HEK293T (cell line): ENCODE measurements at regions of chr3 and their contacts with region 1.

Region 1: DNA sequence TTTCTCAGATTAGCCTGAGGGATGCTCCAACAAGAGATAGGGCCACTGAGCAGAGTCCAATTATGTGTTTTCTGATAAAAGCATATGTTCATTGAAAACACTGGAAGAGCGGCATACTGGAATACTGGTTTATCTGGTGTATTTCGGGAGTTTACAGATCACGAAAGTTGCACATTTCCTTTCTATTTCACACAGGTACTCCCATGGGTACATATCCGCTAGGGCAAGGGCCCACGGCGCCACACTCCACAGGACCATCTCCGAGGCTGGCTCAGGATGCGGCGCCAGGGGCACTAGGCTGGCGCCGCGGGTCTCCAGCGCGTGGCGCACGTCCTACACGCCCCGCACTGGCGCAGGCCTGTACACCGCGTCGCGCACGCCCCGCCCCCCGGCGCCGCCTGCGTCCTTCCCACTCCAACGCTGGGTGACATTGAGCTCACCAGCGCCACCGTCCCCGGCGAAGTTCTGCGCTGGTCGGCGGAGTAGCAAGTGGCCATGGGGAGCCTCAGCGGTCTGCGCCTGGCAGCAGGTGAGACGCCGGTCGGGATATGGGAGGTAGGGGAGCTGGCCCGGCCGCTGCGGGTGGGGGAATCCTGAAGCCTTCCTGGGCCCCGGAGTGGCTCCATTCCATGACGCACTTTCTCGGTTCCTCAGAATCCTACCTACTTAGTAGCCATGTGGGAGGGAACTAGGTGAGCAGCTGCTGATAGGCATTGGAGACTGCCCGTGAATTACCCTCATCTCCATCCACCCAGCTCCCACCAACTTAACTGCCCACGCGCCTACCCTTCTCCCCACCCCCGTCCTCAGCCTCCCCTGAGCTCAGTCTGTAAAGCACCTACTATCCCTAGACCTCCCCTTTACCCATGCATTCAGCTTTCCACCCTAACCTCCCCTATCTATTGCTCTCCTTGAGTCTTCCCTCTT is at the start of gene FAM162A:
- DNase-seq: peak; percentile 90

Region 2: DNA sequence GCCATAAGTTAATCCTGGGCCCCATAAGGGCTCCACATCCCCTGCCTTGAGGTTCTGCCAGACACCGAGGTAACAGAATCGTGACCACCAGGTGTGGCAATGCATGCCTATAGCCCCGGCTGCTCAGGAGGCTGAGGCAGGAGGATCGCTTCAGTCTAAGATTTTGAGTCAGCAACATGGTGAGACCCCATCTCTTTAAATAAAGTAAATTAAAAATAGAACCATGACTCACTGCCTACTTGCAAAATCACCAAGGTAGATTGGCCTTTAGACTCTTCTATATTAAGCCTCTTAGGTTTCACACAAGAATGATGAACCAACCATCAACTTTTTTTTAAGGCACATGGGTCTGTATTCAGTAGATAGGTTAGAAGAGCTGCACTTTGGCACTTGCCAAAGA is 22.2 kb after region 1 on chr3:
- CTCF ChIA-PET with region 1: interaction called, 3 read pairs
- POLR2A ChIA-PET with region 1: interaction called, 11 read pairs
- DNase-seq: no peak

Region 3: DNA sequence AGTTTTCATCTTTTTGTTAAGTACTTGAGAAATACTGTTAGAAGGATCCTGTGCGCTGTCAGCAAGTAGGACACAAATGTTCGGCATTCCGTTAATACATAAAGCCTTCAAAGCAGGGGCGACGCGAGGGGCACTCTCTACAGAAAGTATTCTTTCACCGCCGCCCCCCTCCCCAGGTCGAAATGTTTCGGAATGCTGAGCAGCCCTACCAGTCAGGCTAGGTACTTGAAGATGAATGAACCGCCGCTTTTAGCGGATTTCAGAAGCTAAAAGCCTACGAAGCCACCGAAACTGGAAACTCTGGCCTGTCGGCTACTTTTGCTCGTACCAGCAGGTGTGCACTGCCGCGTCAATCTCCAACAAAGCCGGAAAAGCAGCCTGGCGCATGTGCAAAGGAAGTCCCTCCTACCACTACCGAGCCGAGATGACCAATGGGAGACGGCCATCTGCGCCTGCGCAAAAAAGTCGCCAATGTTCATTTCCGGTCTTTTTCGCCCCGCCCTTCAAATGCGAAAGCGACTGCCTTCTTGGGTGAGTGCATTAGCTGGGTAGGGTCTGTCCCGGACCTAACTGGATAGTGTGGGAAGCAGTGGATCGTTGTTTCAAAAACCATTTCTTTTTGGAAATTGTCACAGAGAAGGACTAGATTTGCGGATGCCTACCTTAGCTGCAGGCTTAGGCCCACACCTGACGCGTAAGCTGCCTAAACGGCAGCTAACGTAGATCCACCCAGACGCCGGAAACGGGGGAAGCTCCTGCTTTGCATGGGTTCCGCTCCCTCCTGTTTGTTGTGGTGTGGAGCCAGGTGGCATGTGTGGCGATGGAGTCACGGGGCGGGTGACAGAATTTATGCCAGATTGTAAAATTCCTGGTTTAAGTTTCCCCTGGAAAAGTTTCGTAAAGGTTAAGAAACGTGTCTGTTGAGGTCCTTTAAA is 32.0 kb after region 1 on chr3 and contains the start of gene WDR5B:
- CTCF ChIA-PET with region 1: interaction called, 3 read pairs
- POLR2A ChIA-PET with region 1: interaction called, 34 read pairs
- DNase-seq: peak; percentile 98